CD8-positive, alpha-beta memory T cell (primary cell): ENCODE measurements at regions of chrX and their contacts with region 1.

Region 1: GRCh38 chrX:70433848-70434351 is 10.7 kb upstream of the DLG3 start:
- DNase-seq: peak; percentile 67 to 83 (median 72)
- H3K4me3 ChIP-seq: peak overlapping the region; percentile 70
- H3K4me3 Mint-ChIP-seq: peak overlapping the region; percentile 90 to 99 (median 92)
- H3K27ac ChIP-seq: peak overlapping the region; percentile 79
- H3K27ac Mint-ChIP-seq: peak overlapping the region; percentile 88 to 97 (median 96)
- H3K4me1 ChIP-seq: peaks cover 4% of the 10 kb centered on the region
- H3K4me1 Mint-ChIP-seq: peaks cover 14 to 32% (median 15%) of the 10 kb centered on the region in 3 donors
- H3K27me3 ChIP-seq: no peaks in the 10 kb centered on the region
- H3K27me3 Mint-ChIP-seq: peaks cover 0 to 11% of the 10 kb centered on the region in 2 donors

Region 2: GRCh38 chrX:70133303-70134115 is 300.4 kb before region 1 on chrX and contains the start of gene IGBP1:
- CTCF ChIA-PET with region 1: interaction called, 14 read pairs
- POLR2A ChIA-PET with region 1: interaction called, 4 read pairs
- DNase-seq: peak; percentile 63 to 90 (median 83)
- H3K4me3 ChIP-seq: peak within 1 kb of the TSS; percentile 96
- H3K4me3 Mint-ChIP-seq: peak within 1 kb of the TSS; percentile 95 to 100 (median 98)
- H3K27ac ChIP-seq: peak within 1 kb of the TSS; percentile 93
- H3K27ac Mint-ChIP-seq: peak within 1 kb of the TSS; percentile 92 to 99 (median 98)
- H3K4me1 ChIP-seq: peaks cover 23% of the 10 kb centered on the region
- H3K4me1 Mint-ChIP-seq: peaks cover 33 to 46% (median 38%) of the 10 kb centered on the region in 3 donors
- H3K27me3 ChIP-seq: no peaks in the 10 kb centered on the region
- H3K27me3 Mint-ChIP-seq: peaks cover 0 to 3% of the 10 kb centered on the region in 2 donors
- total RNA-seq, gene IGBP1: 33.6 TPM

Region 3: DNA sequence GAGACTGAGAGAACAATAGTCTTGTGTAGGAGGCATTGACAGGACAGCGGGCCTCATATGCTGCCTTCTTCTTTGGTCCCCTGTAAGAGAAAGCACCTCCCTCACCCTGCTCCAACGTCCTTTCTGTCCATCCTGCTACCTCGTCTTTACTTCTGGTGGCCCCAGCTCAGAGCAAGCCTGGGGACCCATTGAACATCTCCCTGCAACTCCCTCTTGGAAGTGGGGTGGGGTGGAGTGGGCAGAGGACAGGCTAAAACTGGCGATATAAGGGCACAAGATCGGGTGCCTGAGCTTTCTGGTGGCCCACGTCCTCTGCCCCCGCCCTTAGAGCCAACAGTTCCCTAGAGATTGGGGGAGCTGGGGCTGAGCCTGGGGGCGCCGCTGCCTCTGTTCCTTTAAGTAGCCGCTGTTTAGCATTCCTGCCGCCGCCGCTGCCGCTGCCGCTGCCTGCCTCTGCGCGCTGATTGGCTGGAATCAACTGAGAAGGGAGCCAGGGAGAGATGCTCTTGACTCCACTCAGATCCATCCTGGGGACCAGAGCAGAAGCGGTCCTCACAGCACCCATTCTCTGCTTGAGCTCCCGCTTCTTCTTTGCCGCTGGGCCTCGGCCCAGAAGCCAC is 10.5 kb after region 1 on chrX and contains the start of gene DLG3:
- CTCF ChIA-PET with region 1: interaction called, 10 read pairs
- POLR2A ChIA-PET with region 1: interaction called, 8 read pairs
- DNase-seq: peak in 1 of 5 donors; percentile 9
- H3K4me3 ChIP-seq: no peak within 1 kb of the TSS
- H3K4me3 Mint-ChIP-seq: peak within 1 kb of the TSS; percentile 74 to 82 (median 79)
- H3K27ac ChIP-seq: no peak within 1 kb of the TSS
- H3K27ac Mint-ChIP-seq: peak within 1 kb of the TSS in 1 of 8 donors; percentile 63
- H3K4me1 ChIP-seq: no peaks in the 10 kb centered on the region
- H3K4me1 Mint-ChIP-seq: peaks cover 5 to 6% (median 6%) of the 10 kb centered on the region in 3 donors
- H3K27me3 ChIP-seq: no peaks in the 10 kb centered on the region
- H3K27me3 Mint-ChIP-seq: peaks cover 19 to 23% of the 10 kb centered on the region in 2 donors
- total RNA-seq, gene DLG3: 28.1 to 30.4 TPM

Region 4: DNA sequence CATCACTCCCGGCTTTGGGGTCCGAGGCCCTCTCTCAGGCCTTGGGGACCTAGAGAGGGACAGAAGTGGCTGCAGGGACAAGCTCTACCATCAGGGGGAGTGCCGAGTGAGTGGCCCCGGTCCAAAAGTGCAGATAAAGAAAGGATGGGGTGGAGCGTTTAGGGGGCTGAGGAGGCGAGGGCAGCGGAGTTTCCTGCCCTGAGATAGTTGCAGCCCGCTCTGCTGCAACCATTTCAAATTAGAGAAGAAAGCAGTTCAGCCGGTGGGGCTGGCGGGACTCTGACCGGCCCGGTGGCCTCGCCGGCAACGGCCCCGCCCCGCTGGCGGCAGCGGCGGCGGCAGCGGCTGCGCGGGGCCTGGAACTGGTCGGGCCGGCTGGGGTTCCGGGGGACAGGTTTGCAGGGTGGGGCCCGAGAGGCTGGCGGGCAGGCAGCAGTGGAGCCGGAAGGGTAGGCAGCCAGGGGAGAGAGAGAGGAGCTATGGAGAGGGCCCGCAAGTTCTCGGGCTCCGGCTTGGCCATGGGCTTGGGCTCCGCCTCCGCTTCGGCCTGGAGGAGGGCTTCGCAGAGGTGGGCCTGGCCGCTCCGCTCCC is 18.3 kb after region 1 on chrX:
- CTCF ChIA-PET with region 1: interaction called, 26 read pairs
- POLR2A ChIA-PET with region 1: interaction called, 10 read pairs
- DNase-seq: peak; percentile 34 to 72 (median 43)
- H3K4me3 ChIP-seq: peak overlapping the region; percentile 47
- H3K4me3 Mint-ChIP-seq: peak overlapping the region; percentile 86 to 98 (median 92)
- H3K27ac ChIP-seq: no peak overlapping the region
- H3K27ac Mint-ChIP-seq: peak overlapping the region; percentile 80 to 98 (median 90)
- H3K4me1 ChIP-seq: peaks cover 13% of the 10 kb centered on the region
- H3K4me1 Mint-ChIP-seq: peaks cover 36 to 44% (median 41%) of the 10 kb centered on the region in 3 donors
- H3K27me3 ChIP-seq: no peaks in the 10 kb centered on the region
- H3K27me3 Mint-ChIP-seq: peaks cover 0 to 10% of the 10 kb centered on the region in 2 donors